ENCODE measurements at regions of chr5 and their contacts with region 1.

Region 1: GRCh38 chr5:133944263-133945185 is 23.9 kb downstream of the C5orf15 start:
- DNase-seq: peak; percentile 59 to 69
- H3K4me3 ChIP-seq: no peak overlapping the region
- H3K4me3 Mint-ChIP-seq: no peak overlapping the region
- H3K27ac Mint-ChIP-seq: no peak overlapping the region
- H3K4me1 ChIP-seq: peaks cover 2% of the 10 kb centered on the region
- H3K4me1 Mint-ChIP-seq: no peaks in the 10 kb centered on the region
- H3K27me3 ChIP-seq: no peaks in the 10 kb centered on the region
- H3K27me3 Mint-ChIP-seq: no peaks in the 10 kb centered on the region
- CTCF ChIP-seq: peak; percentile 63 to 79

Region 2: GRCh38 chr5:133423618-133424282 is 520.8 kb before region 1 on chr5:
- CTCF ChIA-PET with region 1: interaction called, 4 read pairs
- POLR2A ChIA-PET with region 1: no interaction called
- intact Hi-C with region 1: loop called (anchors 1 kb)
- DNase-seq: peak; percentile 73 to 87
- H3K4me3 ChIP-seq: no peak overlapping the region
- H3K4me3 Mint-ChIP-seq: peak overlapping the region; percentile 17
- H3K27ac Mint-ChIP-seq: no peak overlapping the region
- H3K4me1 ChIP-seq: 0 out of 2 replicates have a peak, but pooled peaks cover 6% of the 10 kb centered on the region
- H3K4me1 Mint-ChIP-seq: peaks cover 9% of the 10 kb centered on the region
- H3K27me3 ChIP-seq: no peaks in the 10 kb centered on the region
- H3K27me3 Mint-ChIP-seq: peaks cover 8% of the 10 kb centered on the region
- CTCF ChIP-seq: peak; percentile 91 to 94

Region 3: DNA sequence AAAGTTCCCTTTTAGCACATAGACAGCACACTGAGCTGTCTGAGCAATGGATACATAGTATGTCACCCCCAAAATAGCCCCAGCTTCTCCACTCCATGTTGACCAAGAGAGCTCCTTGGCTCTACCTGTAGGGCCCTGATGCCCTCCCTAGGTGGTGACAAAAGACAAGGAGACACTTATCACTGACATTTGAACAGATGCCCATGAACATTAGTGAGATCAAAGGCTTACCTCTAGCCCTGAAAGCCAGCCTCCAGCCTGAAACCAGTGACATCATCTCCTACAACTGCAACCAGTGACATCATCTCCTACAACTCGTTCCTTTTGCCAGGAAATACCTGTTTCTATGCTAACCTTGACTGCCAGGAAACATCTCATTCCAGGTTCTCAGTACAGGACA is 454.9 kb before region 1 on chr5:
- CTCF ChIA-PET with region 1: no interaction called
- POLR2A ChIA-PET with region 1: no interaction called
- intact Hi-C with region 1: loop called (anchors 1 kb)
- DNase-seq: peak in 1 of 2 experiments; percentile 41
- H3K4me3 ChIP-seq: no peak overlapping the region
- H3K4me3 Mint-ChIP-seq: no peak overlapping the region
- H3K27ac Mint-ChIP-seq: no peak overlapping the region
- H3K4me1 ChIP-seq: no peaks in the 10 kb centered on the region
- H3K4me1 Mint-ChIP-seq: no peaks in the 10 kb centered on the region
- H3K27me3 ChIP-seq: no peaks in the 10 kb centered on the region
- H3K27me3 Mint-ChIP-seq: peaks cover 7% of the 10 kb centered on the region
- CTCF ChIP-seq: peak; percentile 23 to 45

Region 4: DNA sequence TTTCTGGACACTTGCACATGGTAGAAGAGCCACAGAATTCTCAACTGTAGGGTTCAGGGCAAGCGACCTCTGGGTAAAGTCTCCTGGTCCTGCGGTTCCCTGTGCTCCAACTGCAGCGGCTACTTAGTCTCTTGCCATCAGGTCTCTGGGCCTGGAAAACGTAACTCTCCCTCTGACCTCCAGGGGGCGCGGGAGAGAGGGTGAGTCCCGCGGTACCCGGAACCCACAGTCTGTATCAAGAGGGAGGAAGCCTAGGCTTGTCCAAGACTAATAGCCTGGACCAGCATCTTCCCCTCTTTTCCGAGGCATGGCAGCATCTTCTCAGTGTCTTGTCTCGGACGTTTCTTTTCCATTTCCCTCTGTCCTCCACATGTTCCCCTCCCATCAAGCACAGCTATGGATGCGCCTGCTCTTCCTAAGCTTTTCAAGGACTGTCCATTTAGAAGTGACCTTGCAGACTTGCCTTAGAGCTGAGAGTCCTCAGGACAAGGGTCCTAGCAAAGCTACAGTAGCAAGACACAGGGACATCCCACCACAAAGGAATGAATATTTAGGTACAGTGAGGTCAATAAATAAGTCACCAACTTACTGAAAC is 391.5 kb before region 1 on chr5:
- CTCF ChIA-PET with region 1: no interaction called
- POLR2A ChIA-PET with region 1: no interaction called
- intact Hi-C with region 1: loop called (anchors 5 kb)
- DNase-seq: peak; percentile 62 to 74
- H3K4me3 ChIP-seq: no peak overlapping the region
- H3K4me3 Mint-ChIP-seq: no peak overlapping the region
- H3K27ac Mint-ChIP-seq: no peak overlapping the region
- H3K4me1 ChIP-seq: no peaks in the 10 kb centered on the region
- H3K4me1 Mint-ChIP-seq: no peaks in the 10 kb centered on the region
- H3K27me3 ChIP-seq: no peaks in the 10 kb centered on the region; the same call in 1 of the 2 replicates
- H3K27me3 Mint-ChIP-seq: peaks cover 12% of the 10 kb centered on the region
- CTCF ChIP-seq: peak; percentile 78 to 79

Region 5: DNA sequence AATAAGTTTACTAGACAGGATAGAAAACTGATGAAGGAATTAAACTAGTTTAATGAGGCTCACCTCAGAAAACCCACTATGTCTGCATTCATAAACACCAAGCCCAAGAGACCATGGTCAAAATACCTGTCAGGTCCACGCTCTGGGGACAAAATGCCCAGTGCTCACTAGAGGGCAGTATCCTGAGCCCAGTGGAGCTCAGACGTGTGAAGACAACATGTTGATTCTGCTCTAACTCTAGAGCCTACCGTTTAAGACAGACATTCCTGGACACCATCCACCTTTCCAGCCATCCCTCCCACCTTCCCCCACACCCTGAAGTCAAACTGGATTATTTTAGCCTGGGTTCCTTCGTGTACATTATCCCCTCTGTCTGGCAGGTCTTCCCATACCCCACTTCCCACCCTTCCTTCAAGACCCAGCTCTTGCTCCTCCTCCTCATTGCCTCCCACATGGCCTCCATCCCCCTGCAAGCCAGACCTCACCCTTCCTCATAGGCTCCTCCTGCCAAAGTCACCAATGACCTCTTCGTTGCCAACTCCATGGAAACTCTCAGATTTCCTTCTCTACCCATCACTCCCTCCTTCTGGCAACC is 189.9 kb before region 1 on chr5:
- CTCF ChIA-PET with region 1: no interaction called
- POLR2A ChIA-PET with region 1: no interaction called
- intact Hi-C with region 1: loop called (anchors 2 kb)
- DNase-seq: peak; percentile 51 to 54
- H3K4me3 ChIP-seq: no peak overlapping the region
- H3K4me3 Mint-ChIP-seq: no peak overlapping the region
- H3K27ac Mint-ChIP-seq: no peak overlapping the region
- H3K4me1 ChIP-seq: no peaks in the 10 kb centered on the region
- H3K4me1 Mint-ChIP-seq: no peaks in the 10 kb centered on the region
- H3K27me3 ChIP-seq: no peaks in the 10 kb centered on the region; the same call in 1 of the 2 replicates
- H3K27me3 Mint-ChIP-seq: peaks cover 9% of the 10 kb centered on the region
- CTCF ChIP-seq: peak; percentile 39 to 73

Region 6: DNA sequence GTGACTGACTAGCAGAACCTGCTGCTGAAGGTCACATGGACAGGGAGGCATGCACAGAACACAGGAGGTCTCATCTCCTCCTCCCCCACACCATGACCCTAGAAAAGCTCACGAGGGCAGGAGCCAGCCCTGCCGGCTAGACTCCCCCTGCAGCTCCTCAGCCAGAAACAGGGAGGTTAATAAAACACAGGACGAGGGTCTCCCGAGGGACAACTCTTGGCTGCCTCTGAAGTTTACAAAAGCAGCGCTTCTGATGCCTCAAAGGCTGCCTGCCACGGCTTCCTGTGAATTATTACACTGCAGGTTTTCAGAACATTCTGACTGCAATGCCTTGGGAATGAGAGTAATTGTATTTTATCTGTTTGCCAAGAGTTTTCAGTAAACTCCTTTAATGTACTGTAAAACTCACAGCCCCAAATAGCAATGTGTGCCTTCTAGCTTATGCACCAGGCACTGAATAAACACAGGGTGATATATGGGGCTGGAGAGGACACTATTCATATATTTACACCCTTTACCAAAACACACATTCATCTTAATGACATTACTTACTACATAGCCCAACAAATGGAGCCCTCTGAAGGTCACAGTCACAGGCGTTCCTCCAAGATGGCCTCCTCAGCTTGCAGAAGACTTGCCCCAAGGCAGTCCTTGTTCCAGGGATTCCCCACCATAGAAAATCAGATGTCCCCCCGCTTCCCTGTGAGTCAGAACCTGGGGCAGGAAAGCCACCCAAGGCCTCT is 59.8 kb before region 1 on chr5:
- CTCF ChIA-PET with region 1: no interaction called
- POLR2A ChIA-PET with region 1: no interaction called
- intact Hi-C with region 1: loop called (anchors 5 kb)
- DNase-seq: peak in 1 of 2 experiments; percentile 20
- H3K4me3 ChIP-seq: no peak overlapping the region
- H3K4me3 Mint-ChIP-seq: no peak overlapping the region
- H3K27ac Mint-ChIP-seq: no peak overlapping the region
- H3K4me1 ChIP-seq: peaks cover 12% of the 10 kb centered on the region
- H3K4me1 Mint-ChIP-seq: peaks cover 6% of the 10 kb centered on the region
- H3K27me3 ChIP-seq: no peaks in the 10 kb centered on the region
- H3K27me3 Mint-ChIP-seq: peaks cover 3% of the 10 kb centered on the region
- CTCF ChIP-seq: no peak

Measured in Caco-2 (cell line).